HepG2 (cell line): ENCODE measurements at regions of chr12 and their contacts with region 1.

Region 1: GRCh38 chr12:62934799-62935674 is at the start of gene PPM1H:
- DNase-seq: peak; percentile 86
- ATAC-seq: peak; percentile 95
- H3K4me3 ChIP-seq: peak within 1 kb of the TSS; percentile 90 to 97 (median 97)
- H3K27ac ChIP-seq: peak within 1 kb of the TSS; percentile 74
- H3K4me1 ChIP-seq: peaks cover 42% of the 10 kb centered on the region
- H3K27me3 ChIP-seq: no peaks in the 10 kb centered on the region; a peak in 1 of 5 replicates
- CTCF ChIP-seq: peak; percentile 98
- EP300 ChIP-seq: peak; percentile 37 to 62; a peak in 2 of 4 replicates
- POLR2A ChIP-seq: peak; percentile 80 to 91
- RAD21 ChIP-seq: peak; percentile 93
- total RNA-seq, gene PPM1H: 38.1 and 42.0 TPM in 2 replicates

Region 2: DNA sequence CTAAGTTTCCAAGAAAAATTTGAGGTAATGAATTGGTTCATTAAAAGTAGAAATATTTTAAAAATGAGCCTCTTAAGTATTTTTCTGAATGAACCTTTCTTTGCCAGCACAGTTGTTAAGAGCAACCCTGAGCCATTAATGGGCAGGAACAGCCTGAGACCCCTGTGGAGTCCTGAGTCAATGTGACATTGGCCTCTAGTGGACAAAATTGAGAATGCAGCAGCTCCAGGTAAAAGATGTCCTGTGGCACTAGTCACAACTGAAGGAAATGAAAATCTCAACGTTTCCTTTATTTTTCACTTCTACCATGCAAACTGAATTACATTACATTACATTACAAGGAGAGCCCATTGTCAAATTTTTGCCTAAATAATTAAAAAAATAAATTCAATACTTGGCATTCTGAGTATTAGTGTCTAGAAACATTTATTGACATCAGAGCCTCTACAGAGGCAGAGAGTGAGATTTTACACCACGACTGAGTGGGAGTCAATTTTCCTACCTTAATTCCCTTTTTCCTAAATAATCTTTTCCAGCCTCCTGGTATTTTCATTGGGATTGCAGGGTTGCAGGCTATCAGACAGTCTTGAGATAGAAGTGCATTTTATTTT is 135.8 kb before region 1 on chr12:
- CTCF ChIA-PET with region 1: no interaction called
- POLR2A ChIA-PET with region 1: no interaction called
- in situ Hi-C with region 1: no loop called
- intact Hi-C with region 1: loop called (anchors 1 kb)
- DNase-seq: peak; percentile 56
- ATAC-seq: peak; percentile 90
- H3K4me3 ChIP-seq: no peak overlapping the region
- H3K27ac ChIP-seq: no peak overlapping the region
- H3K4me1 ChIP-seq: no peaks in the 10 kb centered on the region
- H3K27me3 ChIP-seq: no peaks in the 10 kb centered on the region
- CTCF ChIP-seq: peak; percentile 80
- EP300 ChIP-seq: no peak
- POLR2A ChIP-seq: no peak
- RAD21 ChIP-seq: peak; percentile 69

Region 3: GRCh38 chr12:62891805-62892549 is 43.1 kb before region 1 on chr12:
- CTCF ChIA-PET with region 1: no interaction called
- POLR2A ChIA-PET with region 1: interaction called, 13 read pairs
- in situ Hi-C with region 1: no loop called
- intact Hi-C with region 1: no loop called
- DNase-seq: peak; percentile 97
- ATAC-seq: peak; percentile 93
- H3K4me3 ChIP-seq: peak overlapping the region in 2 of 3 experiments; percentile 15 to 19; a peak in 1 of 6 replicates
- H3K27ac ChIP-seq: peak overlapping the region; percentile 96
- H3K4me1 ChIP-seq: peaks cover 74% of the 10 kb centered on the region
- H3K27me3 ChIP-seq: no peaks in the 10 kb centered on the region
- CTCF ChIP-seq: no peak
- EP300 ChIP-seq: peak in 1 of 2 experiments; percentile 95; a peak in 3 of 4 replicates
- POLR2A ChIP-seq: no peak
- RAD21 ChIP-seq: no peak

Region 4: DNA sequence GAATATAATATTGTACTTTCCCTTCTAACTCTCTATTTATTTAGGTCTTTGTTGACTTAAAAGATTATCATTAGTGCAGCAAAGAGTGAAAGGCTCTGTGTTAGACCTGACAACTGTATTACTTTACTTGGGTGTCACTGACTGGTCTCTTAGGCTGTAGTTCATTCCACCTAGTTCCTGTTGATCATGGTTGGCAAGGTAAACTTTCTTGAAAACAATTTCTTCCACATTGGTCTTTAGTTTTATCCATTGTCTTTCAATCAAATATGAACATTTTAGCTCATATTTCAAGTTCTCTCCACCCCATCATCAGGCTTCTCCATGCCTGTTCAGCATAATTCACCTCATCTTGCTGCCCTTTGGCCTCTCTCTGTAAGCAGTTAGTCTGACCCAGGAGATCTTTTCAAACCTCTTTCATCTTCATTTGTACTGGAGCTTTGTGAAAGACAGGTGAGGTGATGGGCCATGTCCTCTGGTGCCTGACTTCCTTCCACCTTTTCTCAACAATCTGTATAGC is 32.0 kb after region 1 on chr12:
- CTCF ChIA-PET with region 1: no interaction called
- POLR2A ChIA-PET with region 1: interaction called, 4 read pairs
- in situ Hi-C with region 1: no loop called
- intact Hi-C with region 1: loop called (anchors 2 kb)
- DNase-seq: peak; percentile 90
- ATAC-seq: peak; percentile 96
- H3K4me3 ChIP-seq: peak overlapping the region; percentile 12 to 39 (median 21); a peak in 5 of 6 replicates
- H3K27ac ChIP-seq: peak overlapping the region; percentile 97
- H3K4me1 ChIP-seq: peaks cover 93% of the 10 kb centered on the region
- H3K27me3 ChIP-seq: no peaks in the 10 kb centered on the region
- CTCF ChIP-seq: no peak
- EP300 ChIP-seq: peak in 1 of 2 experiments; percentile 77; a peak in 2 of 4 replicates
- POLR2A ChIP-seq: no peak
- RAD21 ChIP-seq: no peak

Region 5: GRCh38 chr12:63068857-63069442 is 133.9 kb after region 1 on chr12:
- CTCF ChIA-PET with region 1: interaction called, 3 read pairs
- POLR2A ChIA-PET with region 1: no interaction called
- in situ Hi-C with region 1: no loop called
- intact Hi-C with region 1: loop called (anchors 2 kb)
- DNase-seq: peak; percentile 33
- ATAC-seq: no peak
- H3K4me3 ChIP-seq: no peak overlapping the region
- H3K27ac ChIP-seq: no peak overlapping the region
- H3K4me1 ChIP-seq: peaks cover 7% of the 10 kb centered on the region
- H3K27me3 ChIP-seq: no peaks in the 10 kb centered on the region
- CTCF ChIP-seq: peak; percentile 58
- EP300 ChIP-seq: no peak
- POLR2A ChIP-seq: no peak
- RAD21 ChIP-seq: no peak